Activated B cell treated with CpG ODN at 0.5 μM for 24 hours (primary cell): ENCODE measurements at regions of chr9 and their contacts with region 1.

Region 1: DNA sequence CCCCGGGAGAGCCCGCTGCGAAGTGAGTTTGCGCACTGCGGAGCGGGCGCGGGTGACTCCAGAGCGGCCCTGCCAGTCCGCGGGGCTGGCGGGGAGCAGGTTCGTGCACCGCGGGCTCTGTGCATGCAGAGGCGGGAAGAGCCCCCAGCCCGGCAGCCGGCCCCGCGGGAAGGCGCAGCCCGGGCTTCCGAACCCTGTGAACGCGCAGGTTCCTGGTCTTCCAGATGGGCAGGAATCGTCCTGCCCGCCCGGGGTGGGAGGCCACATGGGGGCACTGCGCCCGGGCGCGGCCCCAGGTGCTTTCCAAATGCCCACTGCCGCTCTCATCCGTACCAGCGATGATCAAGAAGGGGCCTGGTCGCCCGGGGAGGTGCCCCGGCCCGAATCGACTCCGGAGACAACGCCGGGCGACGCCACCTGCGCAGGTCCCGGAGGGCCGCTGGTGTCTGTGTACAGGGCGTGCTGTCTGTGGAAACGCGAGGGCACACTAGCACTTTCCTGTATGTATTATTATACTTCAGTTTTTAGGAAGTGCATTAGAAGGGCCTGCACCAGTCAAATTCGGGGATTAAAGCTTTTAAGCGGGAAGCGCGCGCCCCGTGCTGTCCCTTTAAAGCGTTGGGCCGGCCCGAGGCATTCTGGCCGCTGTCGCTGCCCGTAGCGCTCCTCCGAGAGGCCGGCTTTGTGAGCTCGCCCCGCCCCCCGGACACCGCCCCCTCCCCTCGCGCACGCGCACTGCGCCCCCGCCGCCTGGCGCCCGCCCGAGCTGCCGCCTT is at the start of gene WDR5:
- DNase-seq: peak; percentile 89
- ATAC-seq: peak; percentile 87
- H3K4me3 Mint-ChIP-seq: peak within 1 kb of the TSS; percentile 89
- H3K27ac Mint-ChIP-seq: peak within 1 kb of the TSS; percentile 90
- H3K4me1 Mint-ChIP-seq: peaks cover 35% of the 10 kb centered on the region
- H3K27me3 Mint-ChIP-seq: no peaks in the 10 kb centered on the region
- CTCF ChIP-seq: no peak
- total RNA-seq, gene WDR5: 20.8 and 22.4 TPM in 2 replicates

Region 2: DNA sequence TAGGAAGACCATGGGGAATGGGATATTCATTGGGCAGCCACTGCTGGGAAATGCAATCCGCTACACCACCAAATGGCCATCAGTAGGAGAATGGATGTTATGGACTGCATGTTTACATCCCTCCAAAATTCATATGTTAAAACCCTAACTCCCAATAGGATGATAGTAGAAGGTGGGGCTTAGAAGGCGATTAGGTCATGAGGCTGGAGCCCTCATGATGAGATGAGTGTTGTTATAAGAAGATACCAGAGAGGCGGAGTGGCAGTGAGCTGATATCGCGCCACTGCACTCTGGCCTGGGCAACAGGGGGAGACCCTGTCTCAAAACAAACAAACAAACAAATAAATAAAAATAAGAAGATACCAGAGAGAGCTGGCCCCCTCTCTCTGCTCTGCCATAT is 1120.8 kb before region 1 on chr9:
- CTCF ChIA-PET with region 1: no interaction called
- POLR2A ChIA-PET with region 1: interaction called, 10 read pairs
- intact Hi-C with region 1: no loop called
- DNase-seq: no peak
- ATAC-seq: no peak
- H3K4me3 Mint-ChIP-seq: no peak overlapping the region
- H3K27ac Mint-ChIP-seq: no peak overlapping the region
- H3K4me1 Mint-ChIP-seq: no peaks in the 10 kb centered on the region
- H3K27me3 Mint-ChIP-seq: peaks cover 9% of the 10 kb centered on the region
- CTCF ChIP-seq: no peak

Region 3: DNA sequence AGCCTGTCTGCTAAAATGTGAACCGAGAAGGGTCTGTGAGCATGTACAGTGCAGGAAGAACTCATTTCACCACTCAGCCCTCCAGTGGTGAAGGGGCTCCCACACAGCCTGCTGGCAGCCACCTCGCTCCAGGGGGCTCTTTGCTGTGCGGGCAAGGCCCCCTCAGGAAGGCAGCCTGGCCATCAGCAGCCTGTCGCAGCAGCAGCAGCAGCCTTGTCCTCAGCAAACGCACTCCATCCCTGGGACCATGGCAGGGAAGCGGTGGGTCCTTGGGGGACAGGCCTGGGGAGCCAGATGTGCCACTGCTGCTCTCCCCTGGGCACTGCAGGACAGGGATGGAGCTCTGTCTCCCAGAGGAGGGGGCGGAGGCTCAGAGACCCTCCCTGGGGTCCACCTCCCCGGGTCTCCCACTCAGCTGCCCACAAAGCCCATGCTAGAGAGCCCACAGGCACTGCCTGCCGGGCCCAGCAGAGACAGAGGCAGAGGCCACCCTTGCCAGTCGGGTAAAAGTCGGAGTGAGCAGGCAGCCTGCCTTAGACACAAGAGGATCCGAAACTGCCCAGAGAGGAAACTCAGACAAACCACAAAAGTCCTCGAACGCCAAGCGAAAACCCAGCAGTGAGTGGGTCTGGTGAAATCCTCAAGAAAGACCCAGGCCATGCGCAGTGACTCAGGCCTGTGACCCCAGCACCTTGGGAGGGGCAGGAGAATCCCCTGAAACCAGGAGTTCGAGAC is 75.7 kb before region 1 on chr9:
- CTCF ChIA-PET with region 1: no interaction called
- POLR2A ChIA-PET with region 1: no interaction called
- intact Hi-C with region 1: loop called (anchors 2 kb)
- DNase-seq: peak; percentile 52
- ATAC-seq: peak; percentile 96
- H3K4me3 Mint-ChIP-seq: peak overlapping the region; percentile 50
- H3K27ac Mint-ChIP-seq: no peak overlapping the region
- H3K4me1 Mint-ChIP-seq: peaks cover 61% of the 10 kb centered on the region
- H3K27me3 Mint-ChIP-seq: no peaks in the 10 kb centered on the region
- CTCF ChIP-seq: no peak

Region 4: DNA sequence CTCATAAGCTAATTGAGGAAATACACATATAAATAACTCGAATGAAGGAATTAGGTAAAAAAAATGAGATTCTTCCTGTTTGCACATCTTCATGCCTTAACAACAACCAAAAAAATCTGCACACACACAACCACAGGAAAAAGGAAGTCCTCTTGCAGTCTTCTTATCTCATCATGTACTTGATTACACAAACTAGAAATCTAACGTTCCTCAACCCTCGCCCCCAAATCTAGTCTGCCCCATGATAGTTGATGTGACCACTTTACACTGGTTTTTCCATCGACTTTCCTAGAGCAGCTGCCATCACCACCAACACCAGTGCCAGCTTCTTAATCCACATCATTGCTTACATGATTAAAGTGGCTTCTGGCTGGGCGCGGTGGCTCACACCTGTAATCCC is 60.0 kb after region 1 on chr9:
- CTCF ChIA-PET with region 1: no interaction called
- POLR2A ChIA-PET with region 1: no interaction called
- intact Hi-C with region 1: no loop called
- DNase-seq: no peak
- ATAC-seq: no peak
- H3K4me3 Mint-ChIP-seq: no peak overlapping the region
- H3K27ac Mint-ChIP-seq: no peak overlapping the region
- H3K4me1 Mint-ChIP-seq: peaks cover 9% of the 10 kb centered on the region
- H3K27me3 Mint-ChIP-seq: peaks cover 6% of the 10 kb centered on the region
- CTCF ChIP-seq: no peak

Region 5: GRCh38 chr9:134258828-134259546 is 123.5 kb after region 1 on chr9:
- CTCF ChIA-PET with region 1: no interaction called
- POLR2A ChIA-PET with region 1: no interaction called
- intact Hi-C with region 1: no loop called
- DNase-seq: no peak
- ATAC-seq: no peak
- H3K4me3 Mint-ChIP-seq: no peak overlapping the region
- H3K27ac Mint-ChIP-seq: no peak overlapping the region
- H3K4me1 Mint-ChIP-seq: peaks cover 4% of the 10 kb centered on the region
- H3K27me3 Mint-ChIP-seq: peaks cover 6% of the 10 kb centered on the region
- CTCF ChIP-seq: no peak